Left cardiac atrium (tissue), 4 donors: ENCODE measurements at regions of chr15 and their contacts with region 1.

Region 1: GRCh38 chr15:63497642-63498467 is 6.5 kb upstream of the USP3 start:
- DNase-seq: peak; percentile 45
- ATAC-seq: peak; percentile 31 to 40

Region 2: GRCh38 chr15:63553388-63553791 is 55.5 kb after region 1 on chr15:
- intact Hi-C with region 1: loop called in 1 of 2 experiments (anchors 10 kb)
- DNase-seq: no peak
- ATAC-seq: peak; percentile 88 to 94